Mammary epithelial cell (primary cell): ENCODE measurements at regions of chr16 and their contacts with region 1.

Region 1: GRCh38 chr16:20900299-20901067 is at the starts of genes DCUN1D3 and LYRM1:
- DNase-seq: peak; percentile 98
- H3K4me3 ChIP-seq: peak within 1 kb of the TSS; percentile 79 to 85 (median 85)
- H3K27ac ChIP-seq: peak within 1 kb of the TSS; percentile 99
- H3K4me1 ChIP-seq: peaks cover 62% of the 10 kb centered on the region
- H3K27me3 ChIP-seq: no peaks in the 10 kb centered on the region
- CTCF ChIP-seq: no peak
- total RNA-seq, gene DCUN1D3: 20.2 to 25.0 TPM
- total RNA-seq, gene LYRM1: 20.8 to 24.3 TPM

Region 2: GRCh38 chr16:20866145-20866772 is 34.2 kb before region 1 on chr16:
- CTCF ChIA-PET with region 1: no interaction called
- dilution Hi-C with region 1: no loop called
- in situ Hi-C with region 1: no loop called
- intact Hi-C with region 1: loop called (anchors 1 kb)
- DNase-seq: peak; percentile 88
- H3K4me3 ChIP-seq: peak overlapping the region in 2 of 3 experiments; percentile 2 to 17
- H3K27ac ChIP-seq: peak overlapping the region; percentile 97
- H3K4me1 ChIP-seq: peaks cover 62% of the 10 kb centered on the region
- H3K27me3 ChIP-seq: no peaks in the 10 kb centered on the region
- CTCF ChIP-seq: no peak

Region 3: DNA sequence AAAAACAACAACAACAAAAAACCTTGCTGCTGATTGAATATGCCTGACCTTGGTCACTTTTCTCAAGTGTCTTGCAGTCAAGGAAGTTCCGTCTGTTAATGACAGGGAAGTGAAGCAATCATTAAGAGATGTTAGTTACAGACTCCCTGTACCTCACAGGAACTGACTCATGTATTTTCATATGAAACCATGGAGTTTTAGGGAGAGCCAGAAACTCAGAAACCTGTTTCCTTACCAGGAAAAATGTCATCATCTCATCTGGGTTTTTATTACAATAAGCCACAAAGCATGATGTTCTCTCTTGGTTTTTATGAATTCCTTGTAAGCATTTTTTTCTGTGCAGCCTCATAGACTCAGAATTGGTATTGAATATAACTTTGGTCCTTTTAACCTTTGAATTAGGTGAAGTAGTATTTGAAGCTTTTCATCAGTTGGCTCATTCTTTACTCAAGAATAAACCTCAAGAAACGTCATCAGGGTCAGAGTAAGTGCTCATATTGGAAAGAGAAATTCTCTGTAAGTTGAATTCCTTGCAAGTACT is 10.4 kb after region 1 on chr16:
- CTCF ChIA-PET with region 1: interaction called, 3 read pairs
- dilution Hi-C with region 1: no loop called
- in situ Hi-C with region 1: no loop called
- intact Hi-C with region 1: loop called (anchors 1 kb)
- DNase-seq: peak; percentile 96
- H3K4me3 ChIP-seq: no peak overlapping the region
- H3K27ac ChIP-seq: peak overlapping the region; percentile 98
- H3K4me1 ChIP-seq: peaks cover 49% of the 10 kb centered on the region
- H3K27me3 ChIP-seq: no peaks in the 10 kb centered on the region
- CTCF ChIP-seq: no peak

Region 4: DNA sequence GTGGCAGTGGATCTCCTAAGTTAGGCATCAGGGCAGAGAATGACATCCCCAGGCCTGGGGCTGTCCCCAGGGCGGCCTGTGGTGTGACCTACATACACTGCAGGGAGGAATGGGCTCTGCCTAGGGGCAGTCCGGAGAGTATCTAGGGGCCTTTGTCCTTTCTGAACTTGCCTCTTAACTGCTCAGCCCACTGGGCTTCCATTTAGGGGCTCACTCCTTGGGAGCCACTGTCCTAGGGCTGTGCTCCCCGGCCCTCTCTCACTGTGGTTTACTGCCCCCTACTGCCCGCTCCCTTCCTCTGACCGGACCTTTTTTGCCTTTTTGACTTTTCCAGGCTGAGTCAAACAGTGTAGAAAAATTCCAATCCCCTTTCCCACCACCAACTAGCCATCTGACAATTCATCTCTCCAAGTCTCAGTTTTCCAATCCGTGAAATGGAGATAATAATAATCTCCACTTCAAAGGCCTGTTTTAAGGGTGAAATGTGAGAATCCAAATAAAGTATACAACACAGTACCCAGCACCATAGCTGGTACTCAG is 183.3 kb after region 1 on chr16:
- CTCF ChIA-PET with region 1: no interaction called
- dilution Hi-C with region 1: no loop called
- in situ Hi-C with region 1: no loop called
- intact Hi-C with region 1: loop called (anchors 5 kb)
- DNase-seq: peak; percentile 36
- H3K4me3 ChIP-seq: no peak overlapping the region
- H3K27ac ChIP-seq: no peak overlapping the region
- H3K4me1 ChIP-seq: peaks cover 3% of the 10 kb centered on the region
- H3K27me3 ChIP-seq: no peaks in the 10 kb centered on the region
- CTCF ChIP-seq: peak; percentile 65 to 84